Adrenal gland (tissue), 19 donors: ENCODE measurements at regions of chr10 and their contacts with region 1.

Region 1: DNA sequence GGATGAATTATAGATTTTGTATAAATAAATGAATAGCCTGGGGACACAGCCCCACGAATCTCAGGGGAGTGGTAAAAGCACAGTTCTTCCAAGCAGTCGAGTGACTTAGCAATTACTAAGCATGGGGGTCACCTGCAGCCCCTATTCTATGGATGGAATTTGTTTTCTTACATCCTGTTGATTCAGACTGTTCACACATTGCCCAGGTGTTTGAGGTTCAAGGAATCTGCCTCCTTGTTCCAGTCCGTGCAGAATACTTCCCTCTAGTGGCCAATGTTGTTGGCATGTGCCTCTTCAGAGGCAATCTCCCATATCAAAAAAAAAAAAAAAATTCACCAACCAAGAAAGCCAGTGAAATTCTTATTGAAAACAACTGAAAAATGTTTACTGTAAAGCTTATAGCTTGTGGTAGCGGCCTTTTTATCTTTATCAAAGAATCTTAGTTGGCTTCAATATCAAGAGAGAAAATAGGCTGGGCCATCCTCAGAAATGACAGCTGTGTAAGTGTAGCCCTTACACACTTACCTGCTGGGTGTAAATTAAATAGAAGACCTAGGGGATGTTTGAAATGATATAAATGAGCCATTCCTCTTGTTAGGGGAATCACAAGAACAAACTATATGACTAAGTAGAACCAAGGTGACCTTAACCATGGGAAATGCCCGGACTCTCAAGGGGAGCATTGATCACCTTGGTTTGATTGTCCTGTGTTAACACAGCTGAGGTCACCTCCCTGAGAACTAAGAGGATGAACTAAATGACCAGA is 7.8 kb downstream of the LIPM start:
- DNase-seq: peak; percentile 22 to 63 (median 46)
- H3K4me3 ChIP-seq: no peak overlapping the region
- H3K27ac ChIP-seq: no peak overlapping the region
- H3K4me1 ChIP-seq: no peaks in the 10 kb centered on the region
- H3K27me3 ChIP-seq: no peaks in the 10 kb centered on the region
- CTCF ChIP-seq: peak; percentile 51 to 73 (median 64)
- POLR2A ChIP-seq: no peak

Region 2: GRCh38 chr10:88562152-88562551 is 248.2 kb before region 1 on chr10:
- intact Hi-C with region 1: loop called in 1 of 2 experiments (anchors 5 kb)
- DNase-seq: no peak
- H3K4me3 ChIP-seq: no peak overlapping the region
- H3K27ac ChIP-seq: no peak overlapping the region
- H3K4me1 ChIP-seq: peaks cover 0 to 4% of the 10 kb centered on the region in 2 donors
- H3K27me3 ChIP-seq: no peaks in the 10 kb centered on the region
- CTCF ChIP-seq: no peak
- POLR2A ChIP-seq: no peak